ENCODE measurements at regions of chr20 and their contacts with region 1.

Region 1: DNA sequence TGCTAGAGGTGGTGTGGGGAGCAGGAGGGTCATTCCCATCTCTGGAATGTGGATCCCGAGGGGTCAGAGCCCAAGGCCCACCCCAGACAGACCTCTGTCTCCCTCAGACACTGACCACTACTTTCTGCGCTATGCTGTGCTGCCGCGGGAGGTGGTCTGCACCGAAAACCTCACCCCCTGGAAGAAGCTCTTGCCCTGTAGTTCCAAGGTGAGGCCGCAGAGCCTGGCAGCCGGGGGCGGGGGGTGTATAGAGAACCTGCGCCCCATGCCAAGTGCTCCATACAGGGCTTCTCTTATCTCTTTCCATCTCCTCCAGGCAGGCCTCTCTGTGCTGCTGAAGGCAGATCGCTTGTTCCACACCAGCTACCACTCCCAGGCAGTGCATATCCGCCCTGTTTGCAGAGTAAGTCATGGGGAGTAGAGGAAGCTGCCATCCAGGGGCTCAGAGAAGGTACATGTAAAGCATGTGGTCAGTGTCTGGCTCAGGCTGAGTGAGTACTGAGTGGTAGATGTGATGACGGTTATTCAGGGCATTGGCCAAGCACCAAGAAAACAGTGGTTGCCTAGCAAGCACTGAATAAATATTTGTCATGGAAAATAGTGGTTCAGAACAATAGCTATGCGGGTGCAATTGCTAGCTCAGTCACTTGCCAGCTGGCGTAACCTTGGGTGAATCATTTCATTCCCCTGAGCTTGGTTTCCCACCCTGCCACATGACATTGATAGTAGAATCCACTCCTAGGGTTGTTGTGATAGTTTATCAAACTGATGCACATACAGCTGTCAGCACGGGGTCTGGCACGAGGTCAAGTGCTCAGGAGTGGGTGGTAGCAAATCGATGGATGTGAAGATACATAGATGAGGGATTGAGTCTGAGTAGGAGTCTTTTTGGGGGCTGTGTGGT is 3.5 kb downstream of the PIGT start:
- DNase-seq: peak; percentile 83 to 94 (median 88)
- ATAC-seq: peak; percentile 91
- H3K4me3 ChIP-seq: no peak overlapping the region
- H3K27ac ChIP-seq: peak overlapping the region; percentile 16 to 86 (median 64)
- H3K4me1 ChIP-seq: peaks cover 37% of the 10 kb centered on the region
- H3K27me3 ChIP-seq: no peaks in the 10 kb centered on the region
- CTCF ChIP-seq: no peak
- POLR2A ChIP-seq: peak in 2 of 3 donors; percentile 50 to 51

Region 2: DNA sequence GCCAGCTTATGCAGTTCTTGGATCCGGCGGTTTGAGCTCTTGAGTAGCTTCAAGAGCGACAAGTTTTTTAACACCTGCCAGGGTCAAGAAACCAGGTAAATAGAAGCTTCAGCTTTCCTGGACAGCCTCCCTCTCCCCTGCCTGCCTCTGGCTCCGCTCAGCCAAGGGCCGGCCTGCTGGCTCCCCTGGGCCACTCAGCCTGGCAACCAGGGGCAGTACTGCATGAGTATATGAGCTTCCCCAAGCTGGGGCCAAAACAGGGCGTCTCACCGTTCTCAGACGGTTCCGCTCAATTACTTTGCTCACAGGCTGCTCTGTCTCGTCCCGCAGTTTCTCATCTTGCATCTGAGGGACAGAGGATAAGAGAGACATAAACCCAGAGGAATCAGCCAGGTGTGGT is 42.2 kb before region 1 on chr20:
- intact Hi-C with region 1: loop called (anchors 5 kb)
- DNase-seq: no peak
- ATAC-seq: no peak
- H3K4me3 ChIP-seq: no peak overlapping the region
- H3K27ac ChIP-seq: no peak overlapping the region
- H3K4me1 ChIP-seq: peaks cover 14% of the 10 kb centered on the region
- H3K27me3 ChIP-seq: no peaks in the 10 kb centered on the region
- CTCF ChIP-seq: no peak
- POLR2A ChIP-seq: no peak